Naive thymus-derived CD4-positive, alpha-beta T cell (primary cell): ENCODE measurements at regions of chr4 and their contacts with region 1.

Region 1: DNA sequence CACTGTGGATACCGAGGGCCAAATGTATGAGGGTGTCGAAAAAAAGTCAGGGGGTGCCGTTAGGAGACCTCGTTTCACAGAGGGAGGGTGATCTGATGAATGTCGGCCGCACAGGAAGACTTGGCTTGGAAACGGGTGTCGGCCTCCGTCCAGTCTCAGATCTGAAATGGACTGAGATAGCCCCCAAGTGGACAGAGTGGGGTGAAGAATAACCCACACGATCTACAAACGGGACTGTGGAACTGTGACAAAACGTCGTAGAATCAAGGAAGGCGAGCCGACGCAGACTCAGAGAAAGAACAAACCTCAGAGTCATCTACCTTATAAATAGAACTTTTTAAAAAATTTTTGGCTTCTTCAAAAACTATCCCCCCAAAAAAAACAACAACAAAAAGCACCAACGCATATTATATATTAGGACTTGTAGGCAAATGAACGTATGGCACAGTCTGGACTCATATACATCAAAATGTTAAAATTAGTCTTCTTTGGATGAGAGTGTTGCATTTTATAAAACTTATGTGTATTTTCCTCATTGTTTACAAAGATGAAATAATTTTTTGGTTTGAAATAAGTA is 63.8 kb upstream of the IRF2 start:
- DNase-seq: peak in 8 of 9 donors; percentile 42 to 67 (median 56)
- ATAC-seq: peak; percentile 79
- H3K4me3 ChIP-seq: peak overlapping the region; percentile 86
- H3K4me3 Mint-ChIP-seq: peak overlapping the region; percentile 83 to 99 (median 95)
- H3K27ac ChIP-seq: peak overlapping the region; percentile 97
- H3K27ac Mint-ChIP-seq: peak overlapping the region; percentile 90 to 100 (median 99)
- H3K4me1 ChIP-seq: peaks cover 20 to 22% of the 10 kb centered on the region in 2 donors
- H3K4me1 Mint-ChIP-seq: peaks cover 34 to 51% (median 45%) of the 10 kb centered on the region in 7 donors
- H3K27me3 ChIP-seq: no peaks in the 10 kb centered on the region
- H3K27me3 Mint-ChIP-seq: no peaks in the 10 kb centered on the region

Region 2: DNA sequence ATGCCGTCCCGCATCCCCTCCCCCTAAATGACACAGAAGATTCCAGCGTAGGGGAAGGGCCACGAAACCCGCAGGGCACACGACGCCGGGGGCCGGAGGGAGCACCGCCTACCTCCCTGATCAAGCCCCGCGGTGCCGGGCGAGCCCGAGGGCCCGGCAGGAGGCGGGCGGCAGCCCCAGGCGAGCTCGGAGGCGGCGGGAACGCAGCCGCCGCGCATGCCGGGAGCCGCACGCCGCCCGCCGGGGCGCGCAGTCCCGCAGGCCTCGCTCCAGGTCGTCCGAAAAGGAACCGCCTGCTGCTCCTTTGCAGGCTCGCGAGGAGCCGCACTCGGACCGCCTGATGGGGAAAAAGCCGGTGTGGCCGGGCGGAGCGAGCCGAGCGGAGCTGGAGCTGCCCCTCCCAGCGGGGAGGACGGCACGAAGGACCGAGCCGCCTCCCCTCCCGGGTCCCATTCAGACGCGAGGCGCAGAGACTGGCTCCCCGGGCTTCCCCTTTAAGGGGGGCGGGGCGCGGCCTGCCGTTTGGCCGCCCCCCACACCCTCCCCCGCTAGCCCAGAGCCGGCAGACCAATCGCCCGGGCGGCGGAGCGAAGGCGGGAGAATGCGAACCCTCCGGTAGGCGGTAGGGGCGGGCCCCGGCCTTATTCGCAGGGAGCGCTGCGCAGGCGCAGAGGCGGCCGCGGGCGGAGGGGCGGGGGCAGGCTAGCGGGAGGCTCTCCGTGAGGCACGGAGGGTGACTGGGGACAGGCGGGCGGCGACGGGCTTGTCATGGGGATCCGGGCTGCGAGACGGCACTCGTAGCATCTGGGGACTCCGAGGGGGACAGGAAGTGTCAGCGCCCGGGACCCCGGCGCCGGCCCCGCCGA is 1033.8 kb before region 1 on chr4:
- CTCF ChIA-PET with region 1: no interaction called
- POLR2A ChIA-PET with region 1: no interaction called
- intact Hi-C with region 1: loop called (anchors 1 to 2 kb)
- DNase-seq: peak; percentile 98 to 100 (median 100)
- ATAC-seq: peak; percentile 89
- H3K4me3 ChIP-seq: peak overlapping the region; percentile 90
- H3K4me3 Mint-ChIP-seq: peak overlapping the region; percentile 83 to 98 (median 92)
- H3K27ac ChIP-seq: peak overlapping the region; percentile 86
- H3K27ac Mint-ChIP-seq: peak overlapping the region; percentile 89 to 99 (median 95)
- H3K4me1 ChIP-seq: peaks cover 6 to 11% of the 10 kb centered on the region in 2 donors
- H3K4me1 Mint-ChIP-seq: peaks cover 11 to 47% (median 43%) of the 10 kb centered on the region in 7 donors
- H3K27me3 ChIP-seq: no peaks in the 10 kb centered on the region
- H3K27me3 Mint-ChIP-seq: no peaks in the 10 kb centered on the region

Region 3: GRCh38 chr4:184310171-184310567 is 227.9 kb before region 1 on chr4:
- CTCF ChIA-PET with region 1: no interaction called
- POLR2A ChIA-PET with region 1: no interaction called
- intact Hi-C with region 1: loop called in 1 of 2 experiments (anchors 1 kb)
- DNase-seq: peak in 5 of 9 donors; percentile 10 to 29 (median 25)
- ATAC-seq: peak; percentile 80
- H3K4me3 ChIP-seq: no peak overlapping the region
- H3K4me3 Mint-ChIP-seq: peak overlapping the region in 8 of 10 donors; percentile 1 to 73 (median 15)
- H3K27ac ChIP-seq: no peak overlapping the region
- H3K27ac Mint-ChIP-seq: peak overlapping the region; percentile 4 to 77 (median 44)
- H3K4me1 ChIP-seq: peaks cover 6 to 15% of the 10 kb centered on the region in 2 donors
- H3K4me1 Mint-ChIP-seq: peaks cover 22 to 63% (median 29%) of the 10 kb centered on the region in 7 donors
- H3K27me3 ChIP-seq: no peaks in the 10 kb centered on the region
- H3K27me3 Mint-ChIP-seq: no peaks in the 10 kb centered on the region

Region 4: GRCh38 chr4:184453365-184454160 is 84.5 kb before region 1 on chr4:
- CTCF ChIA-PET with region 1: interaction called, 3 read pairs
- POLR2A ChIA-PET with region 1: interaction called, 3 read pairs
- intact Hi-C with region 1: loop called in 1 of 2 experiments (anchors 1 kb)
- DNase-seq: peak in 8 of 9 donors; percentile 14 to 82 (median 66)
- ATAC-seq: peak; percentile 98
- H3K4me3 ChIP-seq: peak overlapping the region; percentile 10
- H3K4me3 Mint-ChIP-seq: peak overlapping the region; percentile 22 to 86 (median 70)
- H3K27ac ChIP-seq: peak overlapping the region; percentile 65
- H3K27ac Mint-ChIP-seq: peak overlapping the region; percentile 65 to 98 (median 95)
- H3K4me1 ChIP-seq: peaks cover 18 to 24% of the 10 kb centered on the region in 2 donors
- H3K4me1 Mint-ChIP-seq: peaks cover 70 to 96% (median 88%) of the 10 kb centered on the region in 7 donors
- H3K27me3 ChIP-seq: no peaks in the 10 kb centered on the region
- H3K27me3 Mint-ChIP-seq: no peaks in the 10 kb centered on the region

Region 5: DNA sequence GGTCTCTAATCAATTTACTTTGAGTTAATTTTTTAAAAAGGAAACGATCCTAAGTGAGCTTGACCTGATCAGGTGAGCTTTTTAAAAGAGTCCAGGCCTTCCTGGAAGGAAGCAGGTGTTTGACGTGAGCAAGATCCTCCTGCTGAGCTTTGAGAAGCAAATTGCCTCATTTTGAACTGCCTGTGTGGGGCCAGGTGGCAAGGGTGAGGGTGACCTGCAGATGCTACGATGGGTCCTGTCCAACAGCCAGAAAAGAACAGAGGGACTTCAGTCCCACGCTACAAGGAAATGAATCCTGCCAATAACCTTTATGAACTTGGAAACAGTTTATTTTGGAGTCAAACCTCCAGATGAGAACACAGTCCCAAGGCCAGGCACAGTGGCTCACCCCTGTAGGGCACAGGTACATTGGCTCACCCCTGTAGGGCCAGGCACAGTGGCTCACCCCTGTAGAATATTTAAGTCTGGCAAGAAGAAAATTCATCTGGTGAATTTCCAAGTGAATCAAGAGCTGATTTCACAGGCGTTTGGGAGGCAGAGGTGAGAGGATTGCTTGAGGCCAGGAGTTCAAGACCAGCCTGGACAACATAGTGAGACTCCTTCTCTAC is 53.1 kb after region 1 on chr4:
- CTCF ChIA-PET with region 1: no interaction called
- POLR2A ChIA-PET with region 1: no interaction called
- intact Hi-C with region 1: no loop called
- DNase-seq: no peak
- ATAC-seq: no peak
- H3K4me3 ChIP-seq: no peak overlapping the region
- H3K4me3 Mint-ChIP-seq: no peak overlapping the region
- H3K27ac ChIP-seq: no peak overlapping the region
- H3K27ac Mint-ChIP-seq: no peak overlapping the region
- H3K4me1 ChIP-seq: no peaks in the 10 kb centered on the region
- H3K4me1 Mint-ChIP-seq: peaks cover 0 to 3% (median 0%) of the 10 kb centered on the region in 7 donors
- H3K27me3 ChIP-seq: no peaks in the 10 kb centered on the region
- H3K27me3 Mint-ChIP-seq: peaks cover 0 to 5% (median 0%) of the 10 kb centered on the region in 5 donors

Region 6: GRCh38 chr4:184733654-184734524 is 195.8 kb after region 1 on chr4 and contains the start of gene CENPU:
- CTCF ChIA-PET with region 1: no interaction called
- POLR2A ChIA-PET with region 1: interaction called, 6 read pairs
- intact Hi-C with region 1: loop called (anchors 1 to 2 kb)
- DNase-seq: peak; percentile 89 to 98 (median 94)
- ATAC-seq: peak; percentile 98
- H3K4me3 ChIP-seq: peak within 1 kb of the TSS; percentile 82
- H3K4me3 Mint-ChIP-seq: peak within 1 kb of the TSS; percentile 84 to 98 (median 89)
- H3K27ac ChIP-seq: peak within 1 kb of the TSS; percentile 66
- H3K27ac Mint-ChIP-seq: peak within 1 kb of the TSS; percentile 60 to 96 (median 89)
- H3K4me1 ChIP-seq: peaks cover 7 to 11% of the 10 kb centered on the region in 2 donors
- H3K4me1 Mint-ChIP-seq: peaks cover 4 to 50% (median 20%) of the 10 kb centered on the region in 7 donors
- H3K27me3 ChIP-seq: no peaks in the 10 kb centered on the region
- H3K27me3 Mint-ChIP-seq: no peaks in the 10 kb centered on the region
- total RNA-seq, gene CENPU: 1.1 to 43.8 (median 3.1) TPM

Region 7: DNA sequence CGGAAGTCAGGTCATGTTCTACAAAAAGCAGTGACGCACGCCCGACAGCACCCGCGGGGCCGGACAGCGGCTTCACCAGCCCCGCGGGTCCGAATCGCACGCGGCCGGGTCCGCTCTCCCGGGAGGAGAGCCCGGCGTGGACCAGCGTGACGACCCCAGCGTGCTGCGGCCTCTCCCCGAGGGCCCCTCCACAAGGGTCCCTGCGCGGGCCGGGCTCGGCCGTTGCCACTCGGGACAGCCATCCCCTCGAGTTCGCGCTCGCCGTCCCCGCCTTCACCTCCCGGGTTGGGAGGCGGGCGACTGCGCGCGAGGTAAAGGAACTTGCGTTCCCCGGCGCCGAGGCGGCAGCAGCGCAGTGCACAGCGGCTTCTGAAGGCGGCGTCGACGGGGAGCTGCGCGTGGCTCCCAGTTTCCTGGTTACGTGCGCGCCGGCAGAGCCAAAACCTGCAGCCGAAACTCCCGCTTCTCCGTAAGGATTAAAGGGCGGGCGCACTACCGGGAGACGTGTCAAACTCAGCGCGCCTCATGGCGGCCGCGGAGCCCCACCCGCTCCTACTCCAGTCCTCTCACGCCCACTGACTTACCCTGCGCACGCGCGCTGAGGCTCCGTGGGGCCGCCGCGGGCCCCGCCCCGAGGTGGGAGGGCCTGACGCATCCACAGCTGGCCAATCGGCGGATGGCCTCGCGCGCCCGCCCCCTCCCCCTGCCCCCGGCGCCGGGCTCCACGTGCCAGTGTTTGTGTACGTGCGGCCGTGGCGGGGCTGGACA is 858.0 kb after region 1 on chr4:
- CTCF ChIA-PET with region 1: no interaction called
- POLR2A ChIA-PET with region 1: no interaction called
- intact Hi-C with region 1: loop called (anchors 1 to 10 kb)
- DNase-seq: peak; percentile 93 to 100 (median 97)
- ATAC-seq: peak; percentile 97
- H3K4me3 ChIP-seq: peak overlapping the region; percentile 69
- H3K4me3 Mint-ChIP-seq: peak overlapping the region; percentile 82 to 100 (median 97)
- H3K27ac ChIP-seq: peak overlapping the region; percentile 97
- H3K27ac Mint-ChIP-seq: peak overlapping the region; percentile 90 to 100 (median 99)
- H3K4me1 ChIP-seq: peaks cover 12 to 15% of the 10 kb centered on the region in 2 donors
- H3K4me1 Mint-ChIP-seq: peaks cover 14 to 57% (median 27%) of the 10 kb centered on the region in 7 donors
- H3K27me3 ChIP-seq: no peaks in the 10 kb centered on the region
- H3K27me3 Mint-ChIP-seq: no peaks in the 10 kb centered on the region